RWPE1 (cell line): ENCODE measurements at regions of chr20 and their contacts with region 1.

Region 1: GRCh38 chr20:38748097-38748860 is at the start of gene ACTR5:
- DNase-seq: peak; percentile 98
- H3K27ac ChIP-seq: peak within 1 kb of the TSS; percentile 84
- CTCF ChIP-seq: no peak

Region 2: GRCh38 chr20:38645980-38646858 is 102.1 kb before region 1 on chr20:
- CTCF ChIA-PET with region 1: interaction called, 32 read pairs
- POLR2A ChIA-PET with region 1: no interaction called
- DNase-seq: peak; percentile 95
- H3K27ac ChIP-seq: no peak overlapping the region
- CTCF ChIP-seq: peak; percentile 100

Region 3: DNA sequence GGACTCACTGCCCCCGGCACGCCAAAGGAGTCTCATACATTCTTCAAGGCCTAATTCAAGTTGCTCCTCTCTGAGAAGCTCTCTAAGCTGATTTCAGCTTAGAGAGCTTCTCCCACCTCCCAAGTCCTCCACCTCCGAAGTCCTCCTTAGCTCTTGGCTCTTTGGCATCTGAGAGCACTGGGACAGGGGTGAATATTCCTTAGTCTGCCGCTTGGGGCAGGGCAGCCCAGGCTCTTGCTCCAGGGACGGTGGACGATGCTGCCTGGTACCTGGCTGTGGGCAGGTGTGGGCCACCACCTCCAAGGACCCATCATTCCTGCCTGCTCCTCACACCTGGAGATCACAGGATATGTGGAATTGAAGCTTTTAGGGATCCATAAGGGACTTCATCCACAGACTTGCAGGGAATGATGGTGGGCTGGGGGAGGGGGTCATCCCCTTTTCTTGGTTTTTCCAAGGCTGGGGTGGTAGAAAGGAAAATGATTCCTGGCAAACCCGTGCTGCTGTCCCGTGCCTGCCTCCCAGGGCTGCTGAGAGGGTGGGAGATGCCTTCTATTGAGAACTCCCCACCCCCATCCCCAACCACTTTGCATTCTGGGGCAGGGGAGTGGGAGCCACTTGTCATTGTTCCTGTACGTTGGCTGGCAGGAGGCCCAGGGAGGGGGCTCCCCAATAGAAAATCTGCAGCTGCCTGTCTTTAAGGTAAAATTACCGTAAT is 89.2 kb before region 1 on chr20:
- CTCF ChIA-PET with region 1: interaction called, 29 read pairs
- POLR2A ChIA-PET with region 1: interaction called, 3 read pairs
- DNase-seq: peak; percentile 88
- H3K27ac ChIP-seq: no peak overlapping the region
- CTCF ChIP-seq: peak; percentile 86

Region 4: DNA sequence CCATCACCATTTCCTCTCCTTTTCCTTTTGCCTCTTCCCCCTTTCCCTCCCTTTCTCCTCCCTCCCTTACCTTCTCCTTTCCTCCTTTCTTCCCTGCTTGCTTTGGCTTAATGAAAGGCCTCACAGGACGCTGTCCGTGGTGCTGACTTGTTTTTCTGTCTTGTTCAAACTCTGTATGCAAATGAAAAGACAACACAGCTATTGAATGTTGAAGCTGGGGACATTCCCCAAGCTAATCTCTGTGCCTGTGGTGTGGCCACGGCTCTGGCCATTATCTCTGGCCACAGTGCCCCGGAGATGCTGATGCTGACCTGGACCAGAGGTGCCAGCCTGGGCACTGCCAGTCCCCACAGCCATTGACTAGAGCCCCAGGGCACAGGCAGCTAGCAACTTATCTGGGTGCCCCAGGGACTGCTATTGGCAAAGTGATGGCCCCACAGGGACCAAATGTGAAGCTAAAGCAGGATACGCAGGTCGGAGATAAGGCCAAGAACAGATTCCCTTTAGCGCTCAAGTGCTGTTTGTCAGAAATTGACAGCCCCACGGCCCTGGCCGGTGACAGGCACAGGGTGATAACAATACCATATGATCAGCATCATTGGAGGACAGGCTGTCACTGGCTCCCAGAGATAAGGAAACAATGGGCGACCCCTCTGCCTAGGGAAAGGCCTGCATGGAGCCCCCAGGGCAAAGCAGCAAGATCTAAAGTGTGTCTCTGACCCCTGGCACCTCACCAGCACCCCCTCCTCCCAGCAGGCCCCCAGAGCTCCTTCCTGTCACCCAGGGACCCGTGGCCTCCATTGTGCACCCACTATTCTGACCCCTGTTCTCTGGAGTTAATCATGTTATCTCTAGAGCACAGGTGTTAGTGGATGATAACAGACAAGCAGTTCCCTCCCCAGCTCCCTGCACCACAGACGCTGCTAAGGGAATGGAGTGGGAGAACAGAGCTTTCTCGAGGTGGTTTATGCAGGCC is 55.6 kb before region 1 on chr20:
- CTCF ChIA-PET with region 1: no interaction called
- POLR2A ChIA-PET with region 1: no interaction called
- DNase-seq: peak; percentile 68
- H3K27ac ChIP-seq: no peak overlapping the region
- CTCF ChIP-seq: no peak

Region 5: DNA sequence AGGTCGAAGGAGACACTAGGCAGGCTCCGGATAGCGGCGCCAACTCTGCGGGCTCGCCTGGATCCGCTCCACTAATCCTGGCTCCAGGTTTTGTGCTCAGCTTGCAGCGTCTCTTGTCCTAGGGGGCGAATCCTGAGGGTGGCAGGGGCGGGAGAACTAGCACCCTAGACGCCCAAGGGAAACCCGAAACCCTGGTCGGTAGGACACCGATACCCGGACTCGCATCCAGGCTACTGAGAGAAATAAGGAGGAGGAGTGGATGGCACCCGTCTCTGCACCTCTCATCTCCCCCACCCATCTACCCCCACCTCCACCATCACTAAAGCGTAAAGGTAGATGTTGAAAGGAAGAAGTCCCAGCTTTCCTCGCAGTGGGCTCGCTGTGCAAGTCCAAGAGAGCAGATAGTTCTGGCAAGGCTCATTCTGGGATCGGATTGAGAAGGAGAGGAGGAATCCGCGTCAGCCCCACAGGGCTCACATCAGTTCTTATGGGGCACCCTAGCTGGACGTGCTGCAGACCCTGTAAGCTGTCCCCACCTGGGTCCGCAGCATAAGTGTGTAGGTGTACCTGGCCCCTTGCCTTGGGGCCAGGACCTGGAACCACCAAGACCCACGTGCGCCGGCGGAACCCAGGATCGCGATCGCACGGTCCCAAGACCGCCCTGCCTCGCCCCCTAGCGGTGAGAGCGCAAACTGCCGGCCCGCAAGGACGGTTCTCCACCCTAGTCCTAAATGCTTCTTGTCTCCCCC is 17.1 kb before region 1 on chr20:
- CTCF ChIA-PET with region 1: interaction called, 10 read pairs
- POLR2A ChIA-PET with region 1: no interaction called
- DNase-seq: peak; percentile 87
- H3K27ac ChIP-seq: no peak overlapping the region
- CTCF ChIP-seq: peak; percentile 100

Region 6: GRCh38 chr20:38893565-38894090 is 145.3 kb after region 1 on chr20:
- CTCF ChIA-PET with region 1: interaction called, 11 read pairs
- POLR2A ChIA-PET with region 1: no interaction called
- DNase-seq: peak; percentile 91
- H3K27ac ChIP-seq: no peak overlapping the region
- CTCF ChIP-seq: peak; percentile 99